ENCODE measurements at regions of chr14 and their contacts with region 1.

Region 1: GRCh38 chr14:104137297-104138097 is 890 bp upstream of the KIF26A start:
- DNase-seq: no peak
- H3K4me3 ChIP-seq: no peak overlapping the region
- H3K27ac ChIP-seq: no peak overlapping the region
- H3K4me1 ChIP-seq: peaks cover 12% of the 10 kb centered on the region
- H3K27me3 ChIP-seq: peaks cover 37% of the 10 kb centered on the region
- CTCF ChIP-seq: peak; percentile 32 to 68

Region 2: DNA sequence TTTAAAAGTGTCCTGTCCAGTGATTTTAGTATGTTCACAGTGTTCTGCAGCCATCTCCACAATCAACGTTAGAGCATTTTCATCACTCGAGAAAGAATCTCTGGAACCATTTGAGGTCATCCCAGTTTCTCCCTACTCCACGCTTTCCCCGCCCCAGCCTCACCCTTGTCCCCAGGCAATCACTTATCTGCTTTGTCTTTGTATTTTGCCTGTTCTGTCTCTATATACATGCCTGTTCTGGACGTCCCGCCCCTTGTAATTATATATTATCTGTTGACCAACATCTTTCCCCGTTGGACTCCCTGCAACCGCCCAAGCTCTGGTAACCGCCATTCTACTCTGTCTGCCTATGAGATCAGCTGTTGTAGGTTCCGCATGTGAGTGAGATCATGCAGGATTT is 73.5 kb before region 1 on chr14:
- CTCF ChIA-PET with region 1: no interaction called
- dilution Hi-C with region 1: no loop called
- in situ Hi-C with region 1: no loop called
- intact Hi-C with region 1: no loop called
- DNase-seq: no peak
- H3K4me3 ChIP-seq: no peak overlapping the region
- H3K27ac ChIP-seq: no peak overlapping the region
- H3K4me1 ChIP-seq: no peaks in the 10 kb centered on the region
- H3K27me3 ChIP-seq: no peaks in the 10 kb centered on the region
- CTCF ChIP-seq: no peak

Region 3: GRCh38 chr14:104262515-104263514 is 125.3 kb after region 1 on chr14:
- CTCF ChIA-PET with region 1: no interaction called
- dilution Hi-C with region 1: no loop called
- in situ Hi-C with region 1: no loop called
- intact Hi-C with region 1: no loop called
- DNase-seq: no peak
- H3K4me3 ChIP-seq: no peak overlapping the region
- H3K27ac ChIP-seq: no peak overlapping the region
- H3K4me1 ChIP-seq: no peaks in the 10 kb centered on the region
- H3K27me3 ChIP-seq: no peaks in the 10 kb centered on the region
- CTCF ChIP-seq: no peak

Region 4: GRCh38 chr14:104639889-104640548 is 502.5 kb after region 1 on chr14:
- CTCF ChIA-PET with region 1: no interaction called
- dilution Hi-C with region 1: no loop called
- in situ Hi-C with region 1: loop called (anchors 5 to 10 kb)
- intact Hi-C with region 1: loop called (anchors 1 kb)
- DNase-seq: peak; percentile 30
- H3K4me3 ChIP-seq: no peak overlapping the region
- H3K27ac ChIP-seq: no peak overlapping the region
- H3K4me1 ChIP-seq: peaks cover 4% of the 10 kb centered on the region
- H3K27me3 ChIP-seq: no peaks in the 10 kb centered on the region
- CTCF ChIP-seq: peak; percentile 85 to 95

Measured in mammary epithelial cell (primary cell).